ENCODE measurements at regions of chr12 and their contacts with region 1.

Region 1: GRCh38 chr12:125191361-125192087 is 126.3 kb downstream of the AACS start:
- DNase-seq: peak; percentile 93
- H3K4me3 ChIP-seq: peak overlapping the region; percentile 16
- H3K27ac ChIP-seq: peak overlapping the region; percentile 78
- H3K4me1 ChIP-seq: peaks cover 64% of the 10 kb centered on the region
- CTCF ChIP-seq: no peak

Region 2: GRCh38 chr12:124952801-124953200 is 238.7 kb before region 1 on chr12:
- CTCF ChIA-PET with region 1: no interaction called
- POLR2A ChIA-PET with region 1: no interaction called
- intact Hi-C with region 1: no loop called
- DNase-seq: no peak
- H3K4me3 ChIP-seq: no peak overlapping the region
- H3K27ac ChIP-seq: no peak overlapping the region
- H3K4me1 ChIP-seq: no peaks in the 10 kb centered on the region
- CTCF ChIP-seq: no peak

Region 3: GRCh38 chr12:125245581-125246557 is 54.3 kb after region 1 on chr12:
- CTCF ChIA-PET with region 1: interaction called, 5 read pairs
- POLR2A ChIA-PET with region 1: interaction called, 3 read pairs
- intact Hi-C with region 1: loop called (anchors 2 kb)
- DNase-seq: no peak
- H3K4me3 ChIP-seq: no peak overlapping the region
- H3K27ac ChIP-seq: no peak overlapping the region
- H3K4me1 ChIP-seq: peaks cover 35% of the 10 kb centered on the region
- CTCF ChIP-seq: no peak

Region 4: GRCh38 chr12:125262851-125263250 is 71.3 kb after region 1 on chr12:
- CTCF ChIA-PET with region 1: no interaction called
- POLR2A ChIA-PET with region 1: no interaction called
- intact Hi-C with region 1: no loop called
- DNase-seq: no peak
- H3K4me3 ChIP-seq: no peak overlapping the region
- H3K27ac ChIP-seq: no peak overlapping the region
- H3K4me1 ChIP-seq: no peaks in the 10 kb centered on the region
- CTCF ChIP-seq: no peak